Activated naive CD4-positive, alpha-beta T cell treated with anti-CD3 and anti-CD28 coated beads for 36 hours (primary cell): ENCODE measurements at regions of chr3 and their contacts with region 1.

Region 1: GRCh38 chr3:109806929-109807328 is 469.6 kb upstream of the DPPA4 start:
- DNase-seq: peak; percentile 34
- H3K4me3 Mint-ChIP-seq: no peak overlapping the region
- H3K27ac Mint-ChIP-seq: no peak overlapping the region
- H3K4me1 Mint-ChIP-seq: peaks cover 37% of the 10 kb centered on the region
- H3K27me3 Mint-ChIP-seq: no peaks in the 10 kb centered on the region

Region 2: GRCh38 chr3:109731620-109732473 is 75.1 kb before region 1 on chr3:
- CTCF ChIA-PET with region 1: no interaction called
- intact Hi-C with region 1: loop called (anchors 1 kb)
- DNase-seq: peak; percentile 77
- H3K4me3 Mint-ChIP-seq: no peak overlapping the region
- H3K27ac Mint-ChIP-seq: no peak overlapping the region
- H3K4me1 Mint-ChIP-seq: peaks cover 3% of the 10 kb centered on the region
- H3K27me3 Mint-ChIP-seq: no peaks in the 10 kb centered on the region

Region 3: DNA sequence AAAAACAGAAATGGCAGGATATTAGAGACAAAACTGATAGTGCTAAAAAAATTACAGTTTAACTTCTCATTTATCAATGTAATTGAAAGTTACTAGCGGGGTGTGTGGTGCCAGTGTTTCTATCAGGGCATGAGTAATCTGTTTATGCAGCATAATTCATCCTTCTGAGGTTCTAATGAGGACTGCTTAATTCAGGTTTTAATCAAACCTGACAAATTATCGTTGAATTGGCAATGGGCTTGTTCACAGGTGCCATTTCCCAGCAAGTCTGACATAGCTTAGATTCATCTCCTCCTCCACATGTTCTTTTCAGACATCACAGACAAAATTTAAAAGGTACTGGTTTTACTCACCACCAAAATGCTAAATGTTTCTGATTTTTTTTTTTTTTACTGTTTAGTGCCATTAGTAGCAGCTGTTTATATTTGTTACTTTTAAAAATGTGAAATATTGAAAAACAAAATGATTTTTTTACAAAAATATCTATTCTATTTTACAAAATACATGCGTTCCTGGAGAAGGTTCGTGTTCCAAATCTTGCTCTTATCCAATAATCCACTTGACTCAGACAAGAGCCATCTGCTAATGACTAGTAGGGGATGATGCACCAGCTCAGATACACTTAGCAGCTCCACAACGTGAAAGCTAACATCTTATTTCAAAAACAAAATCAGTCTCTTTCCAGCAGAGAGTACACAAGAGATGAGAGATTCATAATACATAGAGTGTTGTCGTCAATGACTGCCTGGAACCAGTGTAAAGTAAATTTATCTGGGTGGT is 21.9 kb before region 1 on chr3:
- CTCF ChIA-PET with region 1: no interaction called
- intact Hi-C with region 1: no loop called
- DNase-seq: no peak
- H3K4me3 Mint-ChIP-seq: no peak overlapping the region
- H3K27ac Mint-ChIP-seq: no peak overlapping the region
- H3K4me1 Mint-ChIP-seq: peaks cover 6% of the 10 kb centered on the region
- H3K27me3 Mint-ChIP-seq: no peaks in the 10 kb centered on the region

Region 4: GRCh38 chr3:110070161-110070916 is 263.4 kb after region 1 on chr3:
- CTCF ChIA-PET with region 1: no interaction called
- intact Hi-C with region 1: loop called (anchors 1 kb)
- DNase-seq: no peak
- H3K4me3 Mint-ChIP-seq: no peak overlapping the region
- H3K27ac Mint-ChIP-seq: no peak overlapping the region
- H3K4me1 Mint-ChIP-seq: peaks cover 12% of the 10 kb centered on the region
- H3K27me3 Mint-ChIP-seq: no peaks in the 10 kb centered on the region

Region 5: GRCh38 chr3:110314512-110315114 is 507.7 kb after region 1 on chr3:
- CTCF ChIA-PET with region 1: no interaction called
- intact Hi-C with region 1: loop called (anchors 5 kb)
- DNase-seq: peak; percentile 66
- H3K4me3 Mint-ChIP-seq: no peak overlapping the region
- H3K27ac Mint-ChIP-seq: no peak overlapping the region
- H3K4me1 Mint-ChIP-seq: peaks cover 2% of the 10 kb centered on the region
- H3K27me3 Mint-ChIP-seq: no peaks in the 10 kb centered on the region

Region 6: DNA sequence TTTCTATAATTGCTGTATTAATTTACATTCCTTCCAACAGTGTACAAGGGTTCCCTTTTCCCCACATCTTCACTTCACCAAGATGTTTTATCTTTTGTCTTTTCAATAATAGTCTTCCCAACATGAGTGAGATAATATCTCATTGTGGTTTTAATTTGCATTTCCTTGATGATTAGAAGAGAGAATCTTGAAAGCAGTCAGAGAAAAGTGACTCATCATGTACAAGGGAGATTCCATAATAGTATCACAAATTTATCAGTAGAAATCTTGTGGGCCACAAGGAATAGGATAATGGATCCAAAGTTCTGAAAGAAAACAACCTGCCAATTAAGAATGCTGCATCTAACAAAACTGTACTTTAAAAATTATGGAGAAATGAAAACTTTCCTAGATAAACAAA is 1453.9 kb after region 1 on chr3:
- CTCF ChIA-PET with region 1: no interaction called
- intact Hi-C with region 1: loop called (anchors 2 kb)
- DNase-seq: no peak
- H3K4me3 Mint-ChIP-seq: no peak overlapping the region
- H3K27ac Mint-ChIP-seq: no peak overlapping the region
- H3K4me1 Mint-ChIP-seq: peaks cover 13% of the 10 kb centered on the region
- H3K27me3 Mint-ChIP-seq: peaks cover 2% of the 10 kb centered on the region

Region 7: GRCh38 chr3:111761309-111761831 is 1954.4 kb after region 1 on chr3:
- CTCF ChIA-PET with region 1: no interaction called
- intact Hi-C with region 1: loop called (anchors 5 kb)
- DNase-seq: peak; percentile 54
- H3K4me3 Mint-ChIP-seq: no peak overlapping the region
- H3K27ac Mint-ChIP-seq: peak overlapping the region; percentile 68
- H3K4me1 Mint-ChIP-seq: peaks cover 18% of the 10 kb centered on the region
- H3K27me3 Mint-ChIP-seq: no peaks in the 10 kb centered on the region